T-cell (primary cell): ENCODE measurements at regions of chr10 and their contacts with region 1.

Region 1: DNA sequence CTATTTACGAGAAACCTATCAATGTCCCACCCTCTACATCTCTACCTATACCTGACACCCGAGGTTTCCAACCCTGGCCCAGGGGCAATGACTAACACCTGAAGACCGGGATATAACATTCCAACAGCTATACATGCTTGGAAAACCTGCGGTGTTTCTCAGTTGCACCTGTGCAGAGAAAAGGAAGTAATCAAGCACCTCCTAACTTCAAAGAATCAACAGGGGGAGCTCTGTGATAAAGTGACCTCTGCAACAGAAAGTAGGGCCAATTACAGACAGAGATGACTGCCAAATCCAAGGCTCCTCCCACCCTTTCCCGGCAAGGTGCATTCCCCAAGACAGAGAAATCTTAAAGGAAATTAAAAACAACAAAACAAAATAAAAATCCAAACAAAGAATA is 41.3 kb downstream of the CCDC6 start:
- DNase-seq: peak in 1 of 35 experiments; percentile 54
- ATAC-seq: peak in 3 of 4 experiments; percentile 23 to 69 (median 65)
- H3K4me3 ChIP-seq: peak overlapping the region in 1 of 2 donors; percentile 10
- H3K4me3 Mint-ChIP-seq: peak overlapping the region in 2 of 3 donors; percentile 29 to 60
- H3K27ac ChIP-seq: no peak overlapping the region
- H3K27ac Mint-ChIP-seq: peak overlapping the region; percentile 7 to 80
- H3K4me1 ChIP-seq: peaks cover 17% of the 10 kb centered on the region in 2 experiments
- H3K4me1 Mint-ChIP-seq: peaks cover 65 to 79% (median 69%) of the 10 kb centered on the region in 3 donors
- H3K27me3 ChIP-seq: no peaks in the 10 kb centered on the region
- H3K27me3 Mint-ChIP-seq: no peaks in the 10 kb centered on the region

Region 2: GRCh38 chr10:59839175-59839574 is 25.9 kb before region 1 on chr10:
- CTCF ChIA-PET with region 1: no interaction called
- POLR2A ChIA-PET with region 1: no interaction called
- DNase-seq: no peak
- ATAC-seq: no peak
- H3K4me3 ChIP-seq: no peak overlapping the region
- H3K4me3 Mint-ChIP-seq: no peak overlapping the region
- H3K27ac ChIP-seq: no peak overlapping the region
- H3K27ac Mint-ChIP-seq: no peak overlapping the region
- H3K4me1 ChIP-seq: no peaks in the 10 kb centered on the region
- H3K4me1 Mint-ChIP-seq: peaks cover 32 to 43% (median 39%) of the 10 kb centered on the region in 3 donors
- H3K27me3 ChIP-seq: no peaks in the 10 kb centered on the region
- H3K27me3 Mint-ChIP-seq: no peaks in the 10 kb centered on the region

Region 3: DNA sequence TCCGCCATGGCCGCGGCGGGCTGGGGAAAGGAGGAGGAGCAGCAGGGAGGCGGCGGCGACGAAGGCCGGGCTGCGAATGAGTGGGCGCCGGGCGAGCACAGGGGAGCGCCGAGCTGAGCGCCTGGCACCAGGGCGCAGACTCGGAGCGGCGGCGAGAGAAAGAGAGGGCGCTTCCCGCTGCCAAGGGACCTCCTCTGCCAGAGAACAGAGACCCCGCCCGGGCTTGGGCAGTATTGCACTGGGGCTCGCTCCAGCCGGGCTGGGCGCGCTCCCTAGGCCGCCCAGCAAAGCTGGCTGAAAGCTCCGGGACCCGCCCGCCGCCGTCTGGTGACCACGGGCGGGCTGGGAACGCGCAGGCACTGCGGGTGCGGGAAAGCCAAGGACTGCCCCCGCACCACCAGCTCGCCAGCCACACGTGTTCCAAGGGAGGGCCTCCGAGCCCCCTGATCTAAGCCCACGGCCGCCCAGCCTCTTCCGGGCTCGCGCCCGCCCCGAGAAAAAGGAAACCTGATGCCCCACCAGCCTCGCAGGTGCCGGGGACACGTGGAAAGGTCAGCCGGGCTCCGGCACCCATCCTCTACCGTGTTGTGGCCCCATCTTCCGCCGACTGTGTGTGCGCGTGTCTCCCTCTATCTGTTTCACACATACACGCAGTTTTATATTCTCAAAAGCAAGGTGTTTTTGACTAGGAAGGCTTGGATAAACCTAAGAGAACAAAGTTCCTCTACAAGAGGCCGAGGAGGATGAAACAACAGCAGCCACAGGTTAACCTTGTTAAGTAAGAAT is 41.5 kb after region 1 on chr10 and contains the start of gene CCDC6:
- CTCF ChIA-PET with region 1: interaction called, 4 to 30 read pairs
- POLR2A ChIA-PET with region 1: interaction called in 1 of 2 experiments, 4 read pairs
- DNase-seq: peak; percentile 84 to 95 (median 90)
- ATAC-seq: peak; percentile 86 to 91 (median 88)
- H3K4me3 ChIP-seq: peak within 1 kb of the TSS; percentile 72 to 97
- H3K4me3 Mint-ChIP-seq: peak within 1 kb of the TSS; percentile 95 to 97 (median 95)
- H3K27ac ChIP-seq: peak within 1 kb of the TSS; percentile 92
- H3K27ac Mint-ChIP-seq: peak within 1 kb of the TSS; percentile 90 to 98
- H3K4me1 ChIP-seq: peaks cover 27 to 31% of the 10 kb centered on the region in 2 experiments
- H3K4me1 Mint-ChIP-seq: peaks cover 58 to 63% (median 60%) of the 10 kb centered on the region in 3 donors
- H3K27me3 ChIP-seq: no peaks in the 10 kb centered on the region
- H3K27me3 Mint-ChIP-seq: no peaks in the 10 kb centered on the region
- total RNA-seq, gene CCDC6: 16.5 to 26.1 (median 20.1) TPM